ENCODE measurements at regions of chr12 and their contacts with region 1.

Region 1: DNA sequence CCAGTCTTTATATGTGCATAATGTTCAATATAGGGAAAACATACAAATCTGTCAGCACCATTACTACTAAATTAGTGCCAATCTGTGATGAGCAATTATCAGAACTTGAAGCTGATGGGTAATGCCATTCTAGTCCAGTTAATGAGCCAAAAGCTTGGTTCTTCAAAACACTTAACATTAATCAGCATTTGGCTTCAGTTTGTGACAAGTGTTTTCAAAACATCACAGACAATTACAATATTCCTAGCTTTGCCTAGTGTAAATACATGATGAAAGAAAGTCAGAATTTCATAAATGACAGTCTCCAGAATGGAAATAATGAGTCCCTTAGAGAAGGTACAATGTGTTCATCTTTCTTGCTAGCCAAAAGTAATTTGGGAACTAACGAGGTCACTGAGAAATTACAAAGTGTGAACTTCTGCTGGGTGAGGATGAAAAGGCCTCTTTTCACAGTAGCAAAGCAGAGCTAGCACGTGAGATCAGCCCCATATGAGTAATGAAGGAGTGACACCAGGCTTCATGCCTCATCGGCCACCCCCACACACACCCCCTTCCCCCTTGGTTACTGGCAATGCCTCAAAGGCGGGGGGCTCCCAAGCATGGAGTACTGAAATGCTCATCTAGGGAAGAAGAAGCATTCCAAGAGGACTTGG is 180.6 kb upstream of the EEA1 start:
- DNase-seq: peak; percentile 83
- H3K4me3 Mint-ChIP-seq: no peak overlapping the region
- H3K27ac Mint-ChIP-seq: peak overlapping the region; percentile 91
- H3K4me1 Mint-ChIP-seq: peaks cover 32% of the 10 kb centered on the region
- H3K27me3 Mint-ChIP-seq: no peaks in the 10 kb centered on the region

Region 2: GRCh38 chr12:92593734-92594402 is 515.8 kb before region 1 on chr12:
- CTCF ChIA-PET with region 1: no interaction called
- intact Hi-C with region 1: loop called (anchors 5 kb)
- DNase-seq: peak; percentile 87
- H3K4me3 Mint-ChIP-seq: peak overlapping the region; percentile 55
- H3K27ac Mint-ChIP-seq: peak overlapping the region; percentile 96
- H3K4me1 Mint-ChIP-seq: peaks cover 78% of the 10 kb centered on the region
- H3K27me3 Mint-ChIP-seq: no peaks in the 10 kb centered on the region

Region 3: GRCh38 chr12:92673756-92674155 is 435.9 kb before region 1 on chr12:
- CTCF ChIA-PET with region 1: no interaction called
- intact Hi-C with region 1: no loop called
- DNase-seq: no peak
- H3K4me3 Mint-ChIP-seq: no peak overlapping the region
- H3K27ac Mint-ChIP-seq: no peak overlapping the region
- H3K4me1 Mint-ChIP-seq: no peaks in the 10 kb centered on the region
- H3K27me3 Mint-ChIP-seq: no peaks in the 10 kb centered on the region

Region 4: DNA sequence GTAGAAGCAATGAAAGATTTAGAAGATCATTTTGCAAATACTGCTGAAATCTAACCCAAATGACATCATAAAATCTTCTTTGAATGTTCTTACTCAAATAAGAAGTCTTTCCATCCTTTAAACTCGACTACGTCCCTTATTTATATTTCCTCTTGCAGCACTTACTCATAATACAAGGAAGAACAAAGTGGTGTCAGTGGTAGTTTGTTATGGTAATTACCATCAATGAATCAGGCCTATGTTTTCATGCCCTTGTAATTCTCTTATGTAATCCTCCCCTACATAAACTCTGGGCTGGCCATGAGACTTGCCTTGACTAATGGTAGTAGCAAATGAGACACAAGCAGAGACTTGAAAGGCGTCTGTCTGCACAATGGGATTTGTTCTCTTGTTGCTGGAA is 197.6 kb before region 1 on chr12:
- CTCF ChIA-PET with region 1: no interaction called
- intact Hi-C with region 1: loop called (anchors 1 kb)
- DNase-seq: peak; percentile 60
- H3K4me3 Mint-ChIP-seq: no peak overlapping the region
- H3K27ac Mint-ChIP-seq: peak overlapping the region; percentile 74
- H3K4me1 Mint-ChIP-seq: peaks cover 56% of the 10 kb centered on the region
- H3K27me3 Mint-ChIP-seq: no peaks in the 10 kb centered on the region

Region 5: DNA sequence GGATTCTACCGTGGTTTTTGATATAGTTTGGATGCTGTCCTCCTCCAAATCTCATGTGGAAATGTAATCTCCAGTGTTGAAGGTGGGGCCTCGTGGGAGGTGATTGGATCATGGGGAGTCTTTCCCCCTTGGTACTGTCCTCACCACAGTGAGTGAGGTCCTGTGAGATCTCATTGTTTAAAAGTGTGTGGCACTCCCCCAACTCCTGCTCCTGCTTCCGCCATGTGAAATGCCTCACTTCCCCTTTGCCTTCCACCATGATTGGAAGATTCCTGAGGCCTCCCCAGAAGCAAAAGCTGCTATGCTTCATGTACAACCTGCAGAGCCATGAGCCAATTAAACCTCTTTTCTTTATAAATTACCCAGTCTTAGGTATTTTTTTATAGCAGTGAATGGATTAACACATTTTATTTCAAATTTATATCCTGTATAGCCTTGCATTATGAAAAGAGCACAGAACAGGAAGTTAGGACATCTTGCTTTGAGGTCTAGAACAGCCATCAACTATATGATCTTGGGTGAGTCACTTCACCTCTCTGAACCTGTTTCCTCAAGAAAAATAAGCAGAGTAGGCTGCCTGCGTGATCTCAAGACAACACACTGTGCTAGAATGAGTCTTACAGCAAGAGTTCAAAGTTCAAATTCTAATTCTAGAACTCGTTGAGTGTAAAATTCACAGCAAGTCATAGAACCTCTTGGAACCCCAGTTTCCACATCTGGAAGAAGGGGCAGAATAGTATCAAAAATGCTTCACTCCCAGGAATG is 19.7 kb before region 1 on chr12:
- CTCF ChIA-PET with region 1: interaction called, 3 read pairs
- intact Hi-C with region 1: loop called (anchors 1 kb)
- DNase-seq: peak; percentile 64
- H3K4me3 Mint-ChIP-seq: no peak overlapping the region
- H3K27ac Mint-ChIP-seq: peak overlapping the region; percentile 68
- H3K4me1 Mint-ChIP-seq: peaks cover 13% of the 10 kb centered on the region
- H3K27me3 Mint-ChIP-seq: no peaks in the 10 kb centered on the region

Region 6: GRCh38 chr12:93098077-93098476 is 11.6 kb before region 1 on chr12:
- CTCF ChIA-PET with region 1: interaction called, 38 read pairs
- intact Hi-C with region 1: loop called (anchors 1 kb)
- DNase-seq: peak; percentile 91
- H3K4me3 Mint-ChIP-seq: no peak overlapping the region
- H3K27ac Mint-ChIP-seq: peak overlapping the region; percentile 38
- H3K4me1 Mint-ChIP-seq: peaks cover 10% of the 10 kb centered on the region
- H3K27me3 Mint-ChIP-seq: no peaks in the 10 kb centered on the region

Region 7: DNA sequence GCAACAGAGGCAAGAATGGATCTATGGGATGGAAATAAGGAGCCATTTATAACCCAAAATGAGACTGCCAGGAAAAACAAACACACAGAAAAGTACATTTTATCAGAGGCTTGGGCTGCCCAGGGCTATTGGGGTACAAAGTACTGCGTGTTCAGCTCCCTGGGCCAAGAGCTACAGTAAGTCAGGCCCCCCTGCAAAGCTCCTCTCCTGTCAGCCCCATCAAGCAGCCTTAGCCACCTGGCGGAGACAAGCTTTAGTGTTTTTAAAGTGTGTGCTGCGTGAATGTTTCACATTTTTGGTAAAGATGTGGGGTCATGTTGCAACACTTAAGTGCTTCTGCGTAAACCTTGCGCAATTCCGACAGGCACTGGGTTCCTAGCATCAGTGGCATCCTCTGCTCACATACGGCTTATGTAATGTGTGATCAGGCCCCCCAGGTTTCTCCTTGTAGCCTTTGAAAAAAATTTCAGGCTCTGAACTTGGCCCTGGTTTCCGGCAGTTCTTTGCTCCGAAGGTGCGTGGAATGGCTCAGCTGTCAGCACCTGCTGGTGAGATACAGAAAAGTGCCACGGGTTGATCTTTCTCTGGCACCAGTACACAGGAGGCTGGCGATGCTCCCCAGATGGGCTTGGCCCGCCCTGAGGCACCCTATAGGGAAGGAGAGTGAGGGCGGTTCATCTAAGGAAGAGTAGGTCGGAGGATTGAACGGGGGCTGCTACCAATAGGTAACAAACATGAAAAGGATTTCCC is 18.1 kb after region 1 on chr12:
- CTCF ChIA-PET with region 1: no interaction called
- intact Hi-C with region 1: no loop called
- DNase-seq: no peak
- H3K4me3 Mint-ChIP-seq: no peak overlapping the region
- H3K27ac Mint-ChIP-seq: no peak overlapping the region
- H3K4me1 Mint-ChIP-seq: no peaks in the 10 kb centered on the region
- H3K27me3 Mint-ChIP-seq: no peaks in the 10 kb centered on the region

Region 8: DNA sequence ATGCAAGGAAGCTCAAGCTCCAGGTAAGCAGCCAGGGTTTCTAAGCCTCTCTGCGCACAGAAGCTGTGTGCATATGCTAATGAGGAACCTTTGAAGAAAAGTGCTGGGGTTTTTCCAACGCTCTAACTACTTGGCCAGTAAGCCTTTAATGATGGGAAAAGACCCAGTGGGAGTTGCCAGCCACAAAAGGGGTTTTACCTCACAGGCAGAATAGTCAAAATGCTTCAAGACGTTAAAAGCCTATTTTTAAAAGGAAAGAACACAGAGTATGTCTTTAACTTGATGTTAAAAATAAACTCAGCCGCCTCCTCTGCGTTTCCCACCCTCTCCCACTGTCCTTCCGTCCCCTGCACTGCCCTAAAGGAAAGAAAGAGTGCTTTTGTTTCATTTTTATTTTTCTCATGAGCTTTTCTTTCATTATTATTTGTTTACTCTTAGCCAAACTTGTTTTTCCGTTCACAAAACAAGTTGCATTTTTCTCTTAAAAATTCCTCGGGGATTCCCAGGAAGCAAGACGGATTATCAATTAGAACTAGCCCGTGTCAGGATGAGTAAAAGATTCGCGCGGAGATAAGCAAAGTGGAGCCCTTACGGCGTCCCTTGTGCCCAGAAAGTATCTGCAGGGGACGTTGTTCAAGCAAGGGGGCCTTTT is 58.3 kb after region 1 on chr12:
- CTCF ChIA-PET with region 1: no interaction called
- intact Hi-C with region 1: loop called (anchors 1 kb)
- DNase-seq: peak; percentile 85
- H3K4me3 Mint-ChIP-seq: peak overlapping the region; percentile 49
- H3K27ac Mint-ChIP-seq: peak overlapping the region; percentile 67
- H3K4me1 Mint-ChIP-seq: peaks cover 17% of the 10 kb centered on the region
- H3K27me3 Mint-ChIP-seq: peaks cover 7% of the 10 kb centered on the region

Region 9: DNA sequence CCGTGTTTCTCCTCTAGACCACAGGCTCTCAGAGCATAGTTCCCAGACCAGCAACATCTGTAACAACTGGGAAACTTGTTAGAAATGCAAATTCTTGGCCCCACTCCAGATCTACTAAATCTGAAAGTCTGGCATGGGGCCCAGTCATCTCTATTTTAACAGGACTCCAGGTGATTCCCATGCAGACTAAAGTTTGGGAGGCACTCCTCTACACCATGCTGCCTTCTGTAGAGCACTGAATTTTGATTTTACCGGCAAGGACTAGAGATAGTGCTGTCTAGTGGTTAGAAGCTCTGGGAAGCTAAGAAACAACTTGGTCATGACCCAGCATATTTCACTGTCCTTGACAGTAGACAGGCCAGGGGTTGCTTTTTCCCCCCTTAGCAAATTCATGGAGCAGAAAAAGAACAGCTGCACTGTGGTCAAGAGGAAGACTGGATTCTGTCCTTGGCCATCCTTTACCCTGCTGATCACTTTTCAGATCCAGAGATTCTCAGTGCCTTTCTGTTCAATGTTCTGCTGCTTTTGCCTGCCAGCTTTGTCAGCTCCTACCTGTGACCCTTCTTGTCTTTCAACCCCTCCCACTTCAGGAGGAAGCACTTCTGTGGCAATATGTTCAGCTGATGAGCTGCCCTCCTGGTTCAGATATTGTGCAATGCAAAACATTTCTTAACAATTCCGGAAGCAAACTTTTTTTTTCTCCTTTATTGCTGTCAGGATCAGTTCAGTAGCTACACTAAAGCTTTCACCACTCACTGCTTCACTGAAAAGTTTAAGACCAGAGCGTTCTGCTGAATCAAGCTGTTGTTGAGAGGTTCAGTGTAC is 134.2 kb after region 1 on chr12:
- CTCF ChIA-PET with region 1: no interaction called
- intact Hi-C with region 1: loop called (anchors 1 kb)
- DNase-seq: peak; percentile 53
- H3K4me3 Mint-ChIP-seq: peak overlapping the region; percentile 49
- H3K27ac Mint-ChIP-seq: peak overlapping the region; percentile 82
- H3K4me1 Mint-ChIP-seq: peaks cover 34% of the 10 kb centered on the region
- H3K27me3 Mint-ChIP-seq: no peaks in the 10 kb centered on the region

Region 10: DNA sequence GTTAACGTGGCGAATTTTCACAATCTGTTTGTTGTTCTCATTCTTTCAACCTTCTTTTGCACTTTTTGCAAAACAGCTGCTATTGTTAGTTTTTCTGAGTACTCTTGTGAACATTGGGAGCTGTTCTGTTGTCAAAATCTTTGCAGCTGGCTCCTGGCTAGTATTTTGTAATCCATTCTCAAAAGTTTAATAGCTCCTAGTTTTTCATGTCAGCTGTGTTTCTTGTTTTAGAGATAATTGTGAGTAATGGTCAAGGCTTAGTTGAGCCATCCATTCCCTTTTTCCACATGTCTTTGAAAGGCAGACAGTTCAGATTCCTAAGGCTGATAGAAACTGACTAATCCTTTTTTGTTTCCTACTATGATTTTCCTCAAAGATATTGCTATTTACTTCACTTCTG is 528.4 kb after region 1 on chr12:
- CTCF ChIA-PET with region 1: no interaction called
- intact Hi-C with region 1: no loop called
- DNase-seq: no peak
- H3K4me3 Mint-ChIP-seq: no peak overlapping the region
- H3K27ac Mint-ChIP-seq: no peak overlapping the region
- H3K4me1 Mint-ChIP-seq: no peaks in the 10 kb centered on the region
- H3K27me3 Mint-ChIP-seq: no peaks in the 10 kb centered on the region